ENCODE measurements at regions of chr1 and their contacts with region 1.

Region 1: DNA sequence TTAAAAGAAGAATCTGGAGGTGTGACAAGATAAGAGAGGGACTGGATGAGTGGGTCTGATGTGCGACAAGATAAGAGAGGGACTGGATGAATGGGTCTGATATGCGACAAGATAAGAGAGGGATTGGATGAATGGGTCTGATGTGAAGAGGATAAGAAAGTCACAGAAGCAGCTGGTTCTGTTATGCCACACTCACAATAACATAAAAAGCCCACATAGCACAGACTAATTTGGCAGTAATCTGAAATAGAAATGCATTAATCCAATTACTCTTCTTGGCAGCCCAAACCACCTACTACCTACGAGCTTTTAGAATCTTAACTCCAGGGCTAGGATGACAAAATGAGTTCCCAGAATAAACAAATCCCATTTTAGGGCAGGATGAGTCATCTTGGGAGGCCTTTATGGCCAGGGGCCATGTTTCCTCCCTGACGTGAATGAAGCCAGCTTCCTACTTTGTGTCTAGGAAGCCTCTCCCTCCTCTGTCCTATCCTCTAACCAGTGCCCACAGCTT is 129.6 kb downstream of the DUSP10 start:
- DNase-seq: no peak
- ATAC-seq: no peak
- H3K4me3 Mint-ChIP-seq: no peak overlapping the region
- H3K27ac Mint-ChIP-seq: no peak overlapping the region
- H3K4me1 Mint-ChIP-seq: peaks cover 3% of the 10 kb centered on the region
- H3K27me3 Mint-ChIP-seq: no peaks in the 10 kb centered on the region

Region 2: DNA sequence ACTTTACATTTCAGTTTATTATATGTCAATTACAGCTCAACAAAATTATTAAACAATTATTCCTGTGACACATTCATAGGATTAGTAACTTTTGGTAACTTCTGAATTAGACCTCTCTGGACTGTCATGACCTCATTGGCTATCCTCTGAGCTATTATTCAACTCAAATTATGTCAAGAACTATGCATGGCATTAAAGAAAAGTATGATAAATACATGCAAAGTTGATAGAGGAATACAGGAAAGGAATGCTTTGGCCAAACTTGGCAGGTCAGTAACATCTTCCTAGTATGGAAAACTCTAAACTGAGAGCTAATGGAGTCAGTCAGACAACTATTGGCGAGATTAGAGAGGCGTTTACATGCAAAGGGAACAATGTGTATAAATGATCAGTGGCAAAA is 28.9 kb before region 1 on chr1:
- CTCF ChIA-PET with region 1: no interaction called
- POLR2A ChIA-PET with region 1: no interaction called
- intact Hi-C with region 1: loop called in 1 of 2 experiments (anchors 1 kb)
- DNase-seq: no peak
- ATAC-seq: no peak
- H3K4me3 Mint-ChIP-seq: no peak overlapping the region
- H3K27ac Mint-ChIP-seq: no peak overlapping the region
- H3K4me1 Mint-ChIP-seq: no peaks in the 10 kb centered on the region
- H3K27me3 Mint-ChIP-seq: peaks cover 3% of the 10 kb centered on the region

Region 3: GRCh38 chr1:221598122-221598521 is 14.2 kb before region 1 on chr1:
- CTCF ChIA-PET with region 1: no interaction called
- POLR2A ChIA-PET with region 1: no interaction called
- intact Hi-C with region 1: no loop called
- DNase-seq: no peak
- ATAC-seq: no peak
- H3K4me3 Mint-ChIP-seq: no peak overlapping the region
- H3K27ac Mint-ChIP-seq: no peak overlapping the region
- H3K4me1 Mint-ChIP-seq: no peaks in the 10 kb centered on the region
- H3K27me3 Mint-ChIP-seq: no peaks in the 10 kb centered on the region

Region 4: GRCh38 chr1:221630236-221630635 is 17.9 kb after region 1 on chr1:
- CTCF ChIA-PET with region 1: no interaction called
- POLR2A ChIA-PET with region 1: no interaction called
- intact Hi-C with region 1: no loop called
- DNase-seq: no peak
- ATAC-seq: no peak
- H3K4me3 Mint-ChIP-seq: no peak overlapping the region
- H3K27ac Mint-ChIP-seq: no peak overlapping the region
- H3K4me1 Mint-ChIP-seq: no peaks in the 10 kb centered on the region
- H3K27me3 Mint-ChIP-seq: no peaks in the 10 kb centered on the region

Region 5: DNA sequence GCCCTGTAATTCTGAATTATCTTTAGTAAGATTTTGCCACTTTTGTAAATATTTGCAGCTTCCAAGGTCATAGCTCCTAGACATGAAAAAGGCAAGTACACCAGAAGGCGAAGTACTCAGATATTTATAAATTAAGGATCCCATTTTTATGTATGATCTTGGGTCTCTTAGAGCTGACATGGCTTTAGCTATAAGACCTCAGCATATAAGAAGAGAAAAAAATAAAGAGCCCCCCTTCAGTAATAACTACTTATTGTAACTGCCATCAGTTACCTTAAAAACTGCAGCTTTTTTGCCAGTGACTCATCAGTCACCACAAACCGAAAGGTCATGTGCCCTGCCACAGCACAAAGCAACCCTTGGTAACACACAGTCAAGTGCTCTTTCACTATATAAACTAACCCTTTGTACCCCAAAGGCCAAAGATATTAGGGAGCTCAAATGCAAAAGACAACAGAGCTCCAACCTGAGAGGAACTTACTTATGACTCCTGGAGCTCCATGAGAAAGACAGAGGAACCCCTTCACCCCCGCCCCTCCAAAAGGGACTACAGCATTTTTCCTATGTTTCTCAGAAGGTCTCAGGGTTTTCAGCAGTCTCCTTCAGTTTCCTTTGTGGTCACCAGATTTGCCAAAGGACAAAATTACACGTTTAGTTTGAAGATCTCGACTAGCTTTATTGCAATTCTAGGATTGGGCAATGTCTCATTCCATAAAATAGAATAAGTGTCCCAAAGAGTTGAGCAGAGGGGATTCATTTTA is 349.4 kb after region 1 on chr1:
- CTCF ChIA-PET with region 1: no interaction called
- POLR2A ChIA-PET with region 1: no interaction called
- intact Hi-C with region 1: no loop called
- DNase-seq: peak; percentile 72
- ATAC-seq: peak; percentile 97
- H3K4me3 Mint-ChIP-seq: no peak overlapping the region
- H3K27ac Mint-ChIP-seq: peak overlapping the region; percentile 6
- H3K4me1 Mint-ChIP-seq: peaks cover 11% of the 10 kb centered on the region
- H3K27me3 Mint-ChIP-seq: no peaks in the 10 kb centered on the region